ENCODE measurements at regions of chr12 and their contacts with region 1.

Region 1: DNA sequence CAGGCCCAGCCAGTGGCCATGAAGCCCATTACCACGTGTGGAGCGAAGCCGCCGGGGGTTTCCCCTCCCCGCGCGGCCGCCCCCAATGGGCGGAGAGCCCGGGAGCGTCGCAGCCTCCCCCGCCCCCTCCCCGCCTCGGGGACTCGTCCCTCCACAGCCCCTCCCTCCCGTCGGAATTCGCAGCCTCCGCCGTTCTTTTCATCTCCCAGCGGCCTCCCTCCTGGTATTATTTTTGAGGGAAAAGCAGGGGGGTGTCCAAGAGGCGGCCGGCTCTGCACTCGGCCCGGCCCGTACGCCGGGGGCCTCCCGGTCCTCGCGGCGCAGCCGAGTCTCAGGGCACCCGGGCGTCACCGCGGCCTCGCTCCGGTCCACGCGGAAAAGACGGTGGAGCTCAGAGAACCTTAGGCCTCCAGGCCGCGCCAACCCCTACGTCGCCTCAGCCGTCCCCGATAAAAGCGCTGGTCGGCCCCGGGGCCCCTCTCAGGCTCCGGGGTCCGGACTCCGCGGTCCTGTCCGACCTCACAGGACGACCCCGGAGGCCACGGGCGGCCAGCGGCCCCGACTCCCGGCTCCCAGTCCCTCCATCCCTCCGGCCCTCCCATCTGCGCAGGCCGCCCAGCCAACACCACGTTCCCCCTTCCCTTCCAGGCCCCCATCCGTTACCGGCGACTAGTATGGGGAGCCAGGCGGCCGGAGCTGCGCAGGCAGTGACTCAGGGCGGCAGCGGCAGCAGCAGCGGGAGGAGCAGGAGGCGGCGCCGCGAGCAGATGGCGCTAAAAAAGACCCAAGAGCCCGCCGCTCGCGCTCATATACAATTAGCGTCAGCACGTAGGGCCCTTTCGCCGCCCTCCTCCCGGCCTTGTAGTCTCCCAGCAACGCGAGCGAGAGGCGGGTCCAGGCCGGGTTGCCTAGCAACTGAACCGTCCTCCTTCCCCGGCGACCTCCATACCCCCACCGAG is at the start of gene NAP1L1:
- DNase-seq: peak; percentile 99
- H3K4me3 ChIP-seq: peak within 1 kb of the TSS; percentile 77 to 90 (median 80)
- H3K27ac ChIP-seq: peak within 1 kb of the TSS; percentile 97 to 99 (median 98)
- H3K4me1 ChIP-seq: peaks cover 0 to 38% (median 34%) of the 10 kb centered on the region in 4 donors
- H3K27me3 ChIP-seq: no peaks in the 10 kb centered on the region
- CTCF ChIP-seq: peak in 1 of 4 experiments; percentile 4
- EP300 ChIP-seq: no peak
- POLR2A ChIP-seq: peak; percentile 70 to 85
- total RNA-seq, gene NAP1L1: 321 to 424 (median 333) TPM

Region 2: GRCh38 chr12:75390899-75391538 is 693.2 kb before region 1 on chr12 and contains the start of gene GLIPR1L2:
- intact Hi-C with region 1: loop called (anchors 5 kb)
- DNase-seq: peak; percentile 98
- H3K4me3 ChIP-seq: peak within 1 kb of the TSS; percentile 38 to 63 (median 58)
- H3K27ac ChIP-seq: peak within 1 kb of the TSS; percentile 86 to 92 (median 88)
- H3K4me1 ChIP-seq: peaks cover 0 to 29% (median 19%) of the 10 kb centered on the region in 4 donors
- H3K27me3 ChIP-seq: no peaks in the 10 kb centered on the region
- CTCF ChIP-seq: peak; percentile 63 to 79 (median 72)
- EP300 ChIP-seq: no peak
- POLR2A ChIP-seq: peak; percentile 39 to 63
- total RNA-seq, gene GLIPR1L2: 1.1 to 3.0 (median 1.1) TPM in 3 of 4 donors, not detected in the other

Region 3: DNA sequence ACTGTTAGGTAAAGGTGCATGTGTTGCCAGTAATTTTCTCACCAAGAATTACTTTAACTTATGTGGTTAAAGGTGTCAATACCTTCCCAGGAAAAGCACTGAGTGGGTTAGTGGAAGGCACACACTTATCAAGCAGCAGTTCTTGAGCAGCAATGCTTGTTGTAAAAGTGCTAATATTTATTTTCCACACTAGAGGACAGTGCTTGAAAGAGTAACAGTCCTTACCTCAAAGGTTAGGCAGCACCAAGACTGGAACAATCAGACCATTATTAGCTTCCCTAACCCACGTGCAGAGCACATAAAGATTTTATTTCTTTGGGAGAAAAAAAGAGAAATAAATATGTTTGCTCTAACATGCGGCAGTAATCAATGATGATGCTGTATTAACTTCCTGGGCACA is 524.0 kb before region 1 on chr12:
- intact Hi-C with region 1: no loop called
- DNase-seq: no peak
- H3K4me3 ChIP-seq: no peak overlapping the region
- H3K27ac ChIP-seq: no peak overlapping the region
- H3K4me1 ChIP-seq: no peaks in the 10 kb centered on the region
- H3K27me3 ChIP-seq: no peaks in the 10 kb centered on the region
- CTCF ChIP-seq: no peak
- EP300 ChIP-seq: no peak
- POLR2A ChIP-seq: no peak

Region 4: DNA sequence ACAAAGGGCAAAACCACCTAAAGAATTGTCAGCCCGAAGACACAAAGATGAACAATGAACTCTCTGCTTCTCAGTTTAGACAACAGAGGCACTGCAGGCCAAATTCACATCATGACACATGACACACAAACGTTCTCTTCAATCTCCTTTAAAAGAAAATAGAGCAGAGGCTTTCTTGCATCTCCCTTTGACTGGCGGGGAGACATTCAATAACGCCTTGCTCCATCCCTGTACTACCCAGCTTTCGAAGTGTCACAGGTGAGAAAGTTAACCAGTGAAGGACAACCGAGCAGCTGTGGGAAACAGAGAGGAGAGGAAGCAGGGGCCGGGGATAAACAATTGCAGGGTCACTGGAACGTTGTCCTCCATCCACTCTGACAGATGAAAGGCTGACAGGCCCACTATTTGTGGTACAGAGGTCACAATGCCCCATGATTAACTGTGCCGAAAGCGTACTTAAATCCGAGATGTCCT is 183.4 kb before region 1 on chr12:
- intact Hi-C with region 1: no loop called
- DNase-seq: no peak
- H3K4me3 ChIP-seq: no peak overlapping the region
- H3K27ac ChIP-seq: no peak overlapping the region
- H3K4me1 ChIP-seq: no peaks in the 10 kb centered on the region
- H3K27me3 ChIP-seq: no peaks in the 10 kb centered on the region
- CTCF ChIP-seq: no peak
- EP300 ChIP-seq: no peak
- POLR2A ChIP-seq: no peak

Region 5: DNA sequence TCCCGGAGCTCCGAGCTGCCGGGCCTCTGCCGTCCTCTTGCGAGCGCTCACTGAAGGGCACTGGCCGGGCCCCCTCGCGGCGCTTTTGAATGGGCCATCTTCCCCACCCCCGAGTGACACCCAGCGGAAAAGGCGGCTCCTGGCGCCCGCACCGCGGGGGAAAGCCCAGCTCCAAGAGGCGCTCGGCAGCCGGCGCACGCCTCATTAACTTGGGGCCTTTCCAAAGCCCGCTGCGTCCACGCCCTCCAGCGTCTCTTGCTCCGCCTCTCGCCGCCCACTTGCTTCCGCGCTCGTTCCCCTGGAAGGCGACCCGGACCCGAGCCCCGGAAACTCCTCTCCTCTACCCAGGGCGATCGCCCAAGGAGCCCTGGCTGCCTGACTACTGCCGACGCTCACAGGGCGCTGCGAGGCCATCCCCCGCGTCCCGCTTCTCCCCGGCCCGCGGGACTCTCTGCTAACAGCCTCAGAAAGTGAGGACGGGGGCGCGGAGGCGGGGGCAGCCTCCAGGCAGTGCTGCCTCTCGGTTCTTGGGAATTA is 52.6 kb before region 1 on chr12 and contains the start of gene PHLDA1:
- intact Hi-C with region 1: loop called (anchors 2 kb)
- DNase-seq: peak; percentile 98
- H3K4me3 ChIP-seq: peak within 1 kb of the TSS; percentile 73 to 86 (median 85)
- H3K27ac ChIP-seq: peak within 1 kb of the TSS; percentile 92 to 96 (median 93)
- H3K4me1 ChIP-seq: peaks cover 0 to 25% (median 18%) of the 10 kb centered on the region in 4 donors
- H3K27me3 ChIP-seq: peaks cover 0 to 38% (median 0%) of the 10 kb centered on the region in 3 donors
- CTCF ChIP-seq: peak; percentile 36 to 51 (median 45)
- EP300 ChIP-seq: no peak
- POLR2A ChIP-seq: peak in 1 of 2 donors; percentile 42
- total RNA-seq, gene PHLDA1: 3.6 to 10.9 (median 5.3) TPM

Region 6: DNA sequence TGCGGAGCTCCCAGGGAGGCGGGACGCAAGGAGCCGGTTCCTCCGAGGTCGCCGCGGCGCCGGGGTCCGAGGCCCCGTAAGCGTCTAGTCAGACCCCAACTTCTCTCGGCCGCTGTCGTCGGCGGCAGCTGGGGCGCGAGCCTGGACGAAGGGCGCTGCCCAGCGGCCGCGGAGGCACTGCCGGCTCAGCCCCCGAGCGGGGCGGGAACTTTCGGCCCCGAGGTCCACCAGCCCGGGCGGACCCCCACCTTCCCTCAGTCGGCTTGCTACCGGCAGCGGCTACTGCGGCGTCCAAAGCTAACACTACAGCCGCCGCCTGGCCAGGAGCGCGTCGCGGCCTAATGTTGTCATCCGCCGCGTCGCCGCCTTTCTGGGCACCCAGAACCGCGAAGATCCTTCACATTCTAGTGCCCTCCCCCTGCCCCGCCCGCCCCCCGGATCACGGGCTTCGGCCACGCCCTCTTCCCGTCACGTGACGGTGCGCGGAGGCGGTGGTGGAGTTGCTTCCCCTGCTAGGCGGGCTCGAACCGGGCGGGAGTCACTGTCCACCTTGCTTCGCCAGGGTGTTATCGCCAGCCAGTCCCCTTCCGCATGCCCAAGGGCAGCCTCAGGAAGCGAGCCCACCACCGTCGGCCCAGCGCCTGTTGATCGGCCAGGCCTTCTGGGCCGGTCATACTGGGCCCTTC is 475.4 kb after region 1 on chr12 and contains the start of gene OSBPL8:
- intact Hi-C with region 1: loop called (anchors 5 kb)
- DNase-seq: peak; percentile 97
- H3K4me3 ChIP-seq: peak within 1 kb of the TSS; percentile 72 to 90 (median 80)
- H3K27ac ChIP-seq: peak within 1 kb of the TSS; percentile 90 to 93 (median 92)
- H3K4me1 ChIP-seq: peaks cover 0 to 23% (median 14%) of the 10 kb centered on the region in 4 donors
- H3K27me3 ChIP-seq: no peaks in the 10 kb centered on the region
- CTCF ChIP-seq: peak in 1 of 4 experiments; percentile 30
- EP300 ChIP-seq: no peak
- POLR2A ChIP-seq: peak; percentile 39 to 64
- total RNA-seq, gene OSBPL8: 44.8 to 64.3 (median 52.3) TPM

Region 7: GRCh38 chr12:76878899-76879709 is 794.9 kb after region 1 on chr12 and contains the start of gene CSRP2:
- intact Hi-C with region 1: loop called (anchors 10 kb)
- DNase-seq: peak; percentile 93
- H3K4me3 ChIP-seq: peak within 1 kb of the TSS; percentile 55 to 75 (median 72)
- H3K27ac ChIP-seq: peak within 1 kb of the TSS; percentile 81 to 93 (median 90)
- H3K4me1 ChIP-seq: peaks cover 0 to 25% (median 18%) of the 10 kb centered on the region in 4 donors
- H3K27me3 ChIP-seq: no peaks in the 10 kb centered on the region
- CTCF ChIP-seq: peak in 1 of 4 experiments; percentile 15
- EP300 ChIP-seq: peak in 1 of 4 donors; percentile 2
- POLR2A ChIP-seq: peak; percentile 39 to 48
- total RNA-seq, gene CSRP2: 12.3 to 46.2 (median 16.5) TPM

Measured in sigmoid colon (tissue), 7 donors.